ENCODE measurements at regions of chr9 and their contacts with region 1.

Region 1: GRCh38 chr9:22119537-22120158 is 110.5 kb upstream of the CDKN2B start:
- DNase-seq: peak; percentile 50
- ATAC-seq: peak; percentile 30; the same call in 1 of the 2 replicates
- H3K4me3 ChIP-seq: no peak overlapping the region
- H3K27ac ChIP-seq: no peak overlapping the region
- H3K4me1 ChIP-seq: peaks cover 16% of the 10 kb centered on the region
- H3K27me3 ChIP-seq: no peaks in the 10 kb centered on the region
- CTCF ChIP-seq: peak; percentile 64
- POLR2A ChIP-seq: no peak
- RAD21 ChIP-seq: peak; percentile 75

Region 2: DNA sequence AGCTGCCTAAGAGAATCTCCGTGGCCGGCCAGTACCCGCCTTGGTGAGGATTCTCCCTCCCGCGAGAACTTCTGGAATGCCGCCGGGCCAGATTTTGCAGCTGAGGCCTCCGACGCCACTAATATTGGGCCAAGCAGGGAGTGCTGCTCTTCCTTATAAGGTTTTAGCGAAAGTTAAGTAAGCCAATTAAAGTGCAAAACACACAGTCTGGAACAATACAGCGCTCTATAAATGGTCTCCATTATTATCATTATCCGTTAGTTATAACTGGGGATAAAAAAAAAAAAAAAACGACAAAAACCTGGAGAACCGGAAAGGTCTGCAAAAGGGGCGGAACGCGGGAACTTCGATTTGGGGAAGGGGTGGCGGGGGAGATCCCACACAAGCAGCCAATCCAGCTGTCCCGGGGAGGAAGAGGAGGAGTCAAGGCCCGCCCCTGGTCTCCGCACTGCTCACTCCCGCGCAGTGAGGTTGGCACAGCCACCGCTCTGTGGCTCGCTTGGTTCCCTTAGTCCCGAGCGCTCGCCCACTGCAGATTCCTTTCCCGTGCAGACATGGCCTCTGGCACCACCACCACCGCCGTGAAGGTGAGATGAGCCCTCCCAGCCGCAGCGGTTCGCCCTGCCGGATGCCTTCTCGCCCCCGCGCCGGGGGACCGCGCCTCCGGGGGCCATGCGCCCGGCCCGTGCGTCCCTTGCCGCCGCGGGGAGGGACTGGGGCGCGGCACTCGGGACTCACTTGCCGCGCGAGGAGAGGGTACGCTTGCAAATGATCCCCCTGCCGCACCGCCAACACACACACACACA is 317.2 kb before region 1 on chr9 and contains the start of gene MTAP:
- CTCF ChIA-PET with region 1: no interaction called
- POLR2A ChIA-PET with region 1: no interaction called
- dilution Hi-C with region 1: no loop called
- in situ Hi-C with region 1: loop called (anchors 25 kb)
- intact Hi-C with region 1: no loop called
- DNase-seq: peak; percentile 93
- ATAC-seq: peak; percentile 94
- H3K4me3 ChIP-seq: peak within 1 kb of the TSS; percentile 68
- H3K27ac ChIP-seq: peak within 1 kb of the TSS; percentile 83
- H3K4me1 ChIP-seq: peaks cover 7% of the 10 kb centered on the region; the same call in 1 of the 2 replicates
- H3K27me3 ChIP-seq: no peaks in the 10 kb centered on the region
- CTCF ChIP-seq: no peak
- POLR2A ChIP-seq: 0 out of 2 replicates have a peak, but pooled peaks have one; percentile 34
- RAD21 ChIP-seq: no peak
- total RNA-seq, gene MTAP: 33.6 and 50.9 TPM in 2 replicates

Region 3: DNA sequence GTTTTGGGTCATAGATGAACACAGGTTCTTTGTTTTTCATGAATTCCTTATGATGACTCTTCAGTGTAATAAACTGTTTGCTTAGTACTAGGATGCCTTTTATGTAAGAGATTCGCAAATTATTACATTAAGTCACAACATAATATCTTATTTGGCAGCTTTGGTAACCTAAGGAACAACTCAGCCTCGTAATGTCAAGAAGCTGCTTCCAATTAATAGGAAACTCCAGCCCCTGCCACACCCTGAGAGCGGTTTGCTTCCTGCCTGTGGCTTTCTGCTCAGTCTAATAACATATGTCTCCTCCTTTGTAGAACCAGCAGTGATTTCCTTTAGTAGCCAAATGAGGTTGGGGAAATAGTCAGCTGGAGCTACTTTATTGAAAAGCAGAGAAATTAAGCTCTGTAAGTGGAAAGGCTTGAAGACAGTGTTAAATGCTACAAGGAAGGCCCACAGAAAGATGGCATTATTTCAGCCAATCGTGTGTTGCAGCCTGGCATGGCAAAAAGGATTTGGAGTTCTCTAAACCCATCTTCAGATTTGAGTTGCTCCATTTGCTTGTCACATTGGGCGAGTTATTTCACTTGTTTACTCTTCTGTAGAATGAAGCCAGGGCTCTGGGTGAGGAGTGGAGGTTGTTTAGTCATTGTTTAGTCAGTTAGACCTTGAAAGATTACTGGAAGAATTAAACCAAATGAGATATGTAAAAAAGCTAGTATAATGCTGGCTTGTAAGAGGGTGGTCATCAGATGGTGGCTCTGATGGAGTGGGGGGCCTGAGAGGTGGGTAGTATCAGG is 263.1 kb before region 1 on chr9:
- CTCF ChIA-PET with region 1: no interaction called
- POLR2A ChIA-PET with region 1: no interaction called
- dilution Hi-C with region 1: no loop called
- in situ Hi-C with region 1: no loop called
- intact Hi-C with region 1: loop called (anchors 5 kb)
- DNase-seq: peak; percentile 51
- ATAC-seq: peak; percentile 75
- H3K4me3 ChIP-seq: no peak overlapping the region
- H3K27ac ChIP-seq: peak overlapping the region; percentile 33; the same call in 1 of the 2 replicates
- H3K4me1 ChIP-seq: peaks cover 9% of the 10 kb centered on the region
- H3K27me3 ChIP-seq: no peaks in the 10 kb centered on the region
- CTCF ChIP-seq: no peak
- POLR2A ChIP-seq: no peak
- RAD21 ChIP-seq: no peak